CD4-positive, alpha-beta T cell (primary cell): ENCODE measurements at regions of chr12 and their contacts with region 1.

Region 1: GRCh38 chr12:75954041-75954440 is 77.5 kb downstream of the PHLDA1 start:
- DNase-seq: peak in 1 of 14 experiments; percentile 35
- ATAC-seq: no peak
- H3K4me3 ChIP-seq: no peak overlapping the region
- H3K4me3 Mint-ChIP-seq: no peak overlapping the region
- H3K27ac ChIP-seq: no peak overlapping the region
- H3K27ac Mint-ChIP-seq: no peak overlapping the region
- H3K4me1 ChIP-seq: no peaks in the 10 kb centered on the region
- H3K4me1 Mint-ChIP-seq: peaks cover 4% of the 10 kb centered on the region
- H3K27me3 ChIP-seq: no peaks in the 10 kb centered on the region
- H3K27me3 Mint-ChIP-seq: no peaks in the 10 kb centered on the region
- CTCF ChIP-seq: no peak

Region 2: GRCh38 chr12:75996861-75997447 is 42.9 kb after region 1 on chr12:
- CTCF ChIA-PET with region 1: no interaction called
- POLR2A ChIA-PET with region 1: no interaction called
- intact Hi-C with region 1: loop called in 1 of 2 experiments (anchors 1 kb)
- DNase-seq: no peak
- ATAC-seq: no peak
- H3K4me3 ChIP-seq: no peak overlapping the region
- H3K4me3 Mint-ChIP-seq: no peak overlapping the region
- H3K27ac ChIP-seq: no peak overlapping the region
- H3K27ac Mint-ChIP-seq: no peak overlapping the region
- H3K4me1 ChIP-seq: no peaks in the 10 kb centered on the region
- H3K4me1 Mint-ChIP-seq: no peaks in the 10 kb centered on the region
- H3K27me3 ChIP-seq: no peaks in the 10 kb centered on the region
- H3K27me3 Mint-ChIP-seq: no peaks in the 10 kb centered on the region
- CTCF ChIP-seq: no peak